K562 (cell line): ENCODE measurements at regions of chr2 and their contacts with region 1.

Region 1: DNA sequence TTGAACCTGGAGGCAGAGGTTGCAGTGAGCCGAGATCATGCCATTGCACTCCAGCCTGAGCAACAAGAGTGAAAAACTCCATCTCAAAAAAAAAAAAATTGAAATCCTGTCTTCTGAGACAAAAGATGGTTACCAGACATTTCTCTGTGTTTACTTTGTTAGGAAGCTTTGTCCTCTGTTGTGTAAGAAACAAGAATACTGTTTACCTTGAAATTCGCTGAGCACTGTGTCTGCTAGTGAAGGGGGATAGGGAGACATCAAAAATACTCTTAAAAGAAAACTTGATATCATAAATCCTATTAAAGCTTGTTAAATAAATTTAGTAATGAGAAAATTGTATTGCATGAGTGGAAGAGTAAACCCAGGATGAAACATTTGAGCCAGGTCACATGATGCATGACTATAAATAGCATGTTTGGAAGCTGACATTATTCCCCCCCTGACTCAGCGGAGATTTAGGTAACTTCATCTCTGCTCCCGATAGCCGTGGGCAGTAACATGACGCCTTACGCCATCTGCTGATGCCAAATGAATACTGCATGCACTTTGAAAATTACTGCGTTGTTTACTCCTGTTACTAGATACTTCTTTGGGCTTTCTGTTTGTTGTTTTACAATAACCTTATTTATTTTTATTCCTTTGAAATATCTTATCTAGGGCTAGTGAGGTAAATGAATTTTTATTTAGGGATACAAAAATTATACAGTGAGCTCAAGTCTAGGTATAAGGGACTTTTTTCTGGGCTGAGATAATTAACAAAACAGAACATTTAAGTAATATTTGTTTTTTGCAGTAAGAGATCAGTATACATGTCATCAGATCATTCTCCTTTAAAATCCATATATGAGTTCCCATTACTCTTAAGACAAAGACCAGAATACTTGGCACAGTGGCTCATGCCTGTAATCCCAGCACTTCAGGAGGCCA is 134.9 kb downstream of the MAP3K20 start:
- DNase-seq: peak; percentile 70 to 87 (median 78)
- ATAC-seq: peak; percentile 95
- H3K4me3 ChIP-seq: no peak overlapping the region
- H3K27ac ChIP-seq: no peak overlapping the region
- H3K4me1 ChIP-seq: no peaks in the 10 kb centered on the region
- H3K27me3 ChIP-seq: no peaks in the 10 kb centered on the region
- CTCF ChIP-seq: peak; percentile 91 to 98 (median 91)
- EP300 ChIP-seq: peak; percentile 42; the same call in 1 of the 2 replicates
- POLR2A ChIP-seq: no peak
- RAD21 ChIP-seq: peak; percentile 97 to 98

Region 2: GRCh38 chr2:173075781-173076580 is 134.6 kb before region 1 on chr2 and contains the start of gene MAP3K20:
- CTCF ChIA-PET with region 1: interaction called, 4 read pairs
- POLR2A ChIA-PET with region 1: interaction called, 4 read pairs
- in situ Hi-C with region 1: no loop called
- intact Hi-C with region 1: loop called (anchors 2 kb)
- DNase-seq: peak; percentile 72 to 87 (median 86)
- ATAC-seq: peak; percentile 80
- H3K4me3 ChIP-seq: peak within 1 kb of the TSS; percentile 66
- H3K27ac ChIP-seq: peak within 1 kb of the TSS; percentile 78
- H3K4me1 ChIP-seq: peaks cover 17% of the 10 kb centered on the region in 2 experiments; a peak in 4 of 5 replicates
- H3K27me3 ChIP-seq: peaks cover 0 to 1% of the 10 kb centered on the region in 2 experiments; a peak in 1 of 5 replicates
- CTCF ChIP-seq: peak; percentile 42 to 64 (median 58); a peak in 5 of 6 replicates
- EP300 ChIP-seq: no peak
- POLR2A ChIP-seq: peak; percentile 59; the same call in 1 of the 2 replicates
- RAD21 ChIP-seq: peak; percentile 23 to 58; a peak in 3 of 4 replicates
- polyA plus RNA-seq, gene MAP3K20: 9.8 to 9.9 TPM

Region 3: GRCh38 chr2:173354601-173355131 is 144.1 kb after region 1 on chr2 and contains the start of gene CDCA7:
- CTCF ChIA-PET with region 1: no interaction called
- POLR2A ChIA-PET with region 1: no interaction called
- in situ Hi-C with region 1: no loop called
- intact Hi-C with region 1: loop called (anchors 10 kb)
- DNase-seq: peak; percentile 89 to 95 (median 94)
- ATAC-seq: peak; percentile 88
- H3K4me3 ChIP-seq: peak within 1 kb of the TSS; percentile 78
- H3K27ac ChIP-seq: peak within 1 kb of the TSS; percentile 93
- H3K4me1 ChIP-seq: peaks cover 17 to 22% of the 10 kb centered on the region in 2 experiments; a peak in 4 of 5 replicates
- H3K27me3 ChIP-seq: 0 out of 5 replicates have a peak, but pooled peaks cover 0 to 5% of the 10 kb centered on the region in 2 experiments
- CTCF ChIP-seq: peak in 2 of 3 experiments; percentile 4 to 19; a peak in 2 of 6 replicates
- EP300 ChIP-seq: 0 out of 2 replicates have a peak, but pooled peaks have one; percentile 38
- POLR2A ChIP-seq: peak; percentile 83
- RAD21 ChIP-seq: 0 out of 4 replicates have a peak, but pooled peaks of 1 of the 2 experiments have one; percentile 16
- polyA plus RNA-seq, gene CDCA7: 28.5 to 41.4 TPM